ENCODE measurements at regions of chr15 and their contacts with region 1.

Region 1: GRCh38 chr15:46312133-46312740 is 677.4 kb downstream of the SQOR start:
- DNase-seq: peak in 1 of 2 donors; percentile 66
- ATAC-seq: peak; percentile 47 to 70 (median 55)
- H3K4me3 ChIP-seq: no peak overlapping the region
- H3K4me3 Mint-ChIP-seq: no peak overlapping the region
- H3K27ac ChIP-seq: no peak overlapping the region
- H3K27ac Mint-ChIP-seq: no peak overlapping the region
- H3K4me1 ChIP-seq: no peaks in the 10 kb centered on the region
- H3K4me1 Mint-ChIP-seq: no peaks in the 10 kb centered on the region
- H3K27me3 ChIP-seq: no peaks in the 10 kb centered on the region
- H3K27me3 Mint-ChIP-seq: no peaks in the 10 kb centered on the region
- CTCF ChIP-seq: peak; percentile 47

Region 2: GRCh38 chr15:46768287-46768686 is 456.1 kb after region 1 on chr15:
- intact Hi-C with region 1: no loop called
- DNase-seq: no peak
- ATAC-seq: no peak
- H3K4me3 ChIP-seq: no peak overlapping the region
- H3K4me3 Mint-ChIP-seq: no peak overlapping the region
- H3K27ac ChIP-seq: no peak overlapping the region
- H3K27ac Mint-ChIP-seq: no peak overlapping the region
- H3K4me1 ChIP-seq: no peaks in the 10 kb centered on the region
- H3K4me1 Mint-ChIP-seq: no peaks in the 10 kb centered on the region
- H3K27me3 ChIP-seq: no peaks in the 10 kb centered on the region
- H3K27me3 Mint-ChIP-seq: no peaks in the 10 kb centered on the region
- CTCF ChIP-seq: no peak

Region 3: DNA sequence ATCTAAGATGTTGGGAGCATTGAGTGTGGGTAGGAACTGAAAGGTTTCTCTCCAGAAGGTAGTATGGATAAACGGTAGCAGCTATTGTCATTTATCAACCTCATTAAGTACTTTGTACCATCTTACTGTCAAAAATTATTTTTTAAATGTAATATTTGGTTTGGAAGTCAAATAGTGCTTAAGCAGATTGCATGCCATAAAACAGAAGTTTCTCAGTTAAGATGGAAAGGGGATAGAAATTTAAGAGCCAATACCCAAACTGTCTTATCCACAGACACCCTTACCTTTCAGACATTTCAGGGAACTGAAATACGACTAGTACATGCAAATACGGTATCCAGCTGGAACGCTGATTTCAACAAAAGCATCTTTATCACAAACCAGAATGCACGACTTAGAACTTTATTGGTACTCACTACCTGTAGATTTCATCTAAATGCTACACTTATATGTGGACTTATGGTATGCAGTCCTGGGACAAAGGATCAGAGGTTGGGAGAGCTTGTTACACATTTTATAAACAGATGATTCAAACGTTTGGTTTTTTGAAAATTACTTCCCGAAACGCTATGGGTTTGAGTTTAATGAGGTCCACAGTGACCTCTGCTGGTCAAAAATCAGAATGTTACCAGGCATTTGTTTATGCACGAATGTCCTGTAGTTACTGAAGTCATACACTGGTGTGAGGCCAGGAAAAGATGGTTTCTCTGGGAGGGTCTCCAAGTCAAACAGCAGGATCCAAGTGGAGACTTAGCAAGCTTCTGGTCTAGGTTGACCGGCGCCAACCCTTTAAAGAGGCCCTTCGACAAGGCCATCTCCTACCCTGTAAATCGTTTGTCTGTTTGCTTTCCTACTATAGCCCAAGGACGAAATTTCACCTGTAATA is 1973.3 kb after region 1 on chr15:
- intact Hi-C with region 1: loop called (anchors 5 kb)
- DNase-seq: peak in 1 of 2 donors; percentile 72
- ATAC-seq: peak; percentile 53 to 64 (median 58)
- H3K4me3 ChIP-seq: no peak overlapping the region
- H3K4me3 Mint-ChIP-seq: no peak overlapping the region
- H3K27ac ChIP-seq: no peak overlapping the region
- H3K27ac Mint-ChIP-seq: no peak overlapping the region
- H3K4me1 ChIP-seq: no peaks in the 10 kb centered on the region
- H3K4me1 Mint-ChIP-seq: peaks cover 0 to 6% of the 10 kb centered on the region in 2 donors
- H3K27me3 ChIP-seq: no peaks in the 10 kb centered on the region
- H3K27me3 Mint-ChIP-seq: peaks cover 4 to 14% of the 10 kb centered on the region in 2 donors
- CTCF ChIP-seq: peak; percentile 78